Heart left ventricle (tissue), 16 donors: ENCODE measurements at regions of chr2 and their contacts with region 1.

Region 1: GRCh38 chr2:154709215-154709614 is 10.7 kb downstream of the KCNJ3 start:
- DNase-seq: no peak
- ATAC-seq: no peak
- H3K4me3 ChIP-seq: no peak overlapping the region
- H3K27ac ChIP-seq: no peak overlapping the region
- H3K4me1 ChIP-seq: no peaks in the 10 kb centered on the region
- H3K27me3 ChIP-seq: no peaks in the 10 kb centered on the region
- CTCF ChIP-seq: no peak
- POLR2A ChIP-seq: no peak

Region 2: GRCh38 chr2:154392256-154392655 is 317.0 kb before region 1 on chr2:
- intact Hi-C with region 1: no loop called
- DNase-seq: no peak
- ATAC-seq: no peak
- H3K4me3 ChIP-seq: no peak overlapping the region
- H3K27ac ChIP-seq: no peak overlapping the region
- H3K4me1 ChIP-seq: no peaks in the 10 kb centered on the region
- H3K27me3 ChIP-seq: no peaks in the 10 kb centered on the region
- CTCF ChIP-seq: no peak
- POLR2A ChIP-seq: no peak

Region 3: DNA sequence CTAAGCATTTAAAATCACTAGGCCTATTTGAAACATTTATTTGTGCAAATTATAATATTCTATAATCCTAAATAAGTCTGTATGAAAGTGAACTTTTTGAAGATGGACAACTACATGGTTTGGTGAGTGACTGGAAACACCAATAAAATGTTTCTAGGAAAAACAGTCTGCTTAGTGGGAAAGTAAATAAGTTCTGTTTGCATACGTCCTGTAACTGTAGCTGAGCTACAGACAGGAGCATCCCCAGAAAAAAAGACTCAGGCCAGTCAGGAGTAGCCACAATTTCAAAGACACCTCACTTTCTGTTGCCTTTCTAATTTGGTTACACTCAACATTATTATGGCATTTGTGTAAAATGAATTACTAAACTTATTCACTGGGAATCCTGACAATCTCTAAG is 39.1 kb before region 1 on chr2:
- intact Hi-C with region 1: no loop called
- DNase-seq: no peak
- ATAC-seq: no peak
- H3K4me3 ChIP-seq: no peak overlapping the region
- H3K27ac ChIP-seq: no peak overlapping the region
- H3K4me1 ChIP-seq: no peaks in the 10 kb centered on the region
- H3K27me3 ChIP-seq: no peaks in the 10 kb centered on the region
- CTCF ChIP-seq: no peak
- POLR2A ChIP-seq: no peak

Region 4: GRCh38 chr2:155301221-155301620 is 592.0 kb after region 1 on chr2:
- intact Hi-C with region 1: loop called in 1 of 10 experiments (anchors 5 kb)
- DNase-seq: no peak
- ATAC-seq: no peak
- H3K4me3 ChIP-seq: no peak overlapping the region
- H3K27ac ChIP-seq: no peak overlapping the region
- H3K4me1 ChIP-seq: no peaks in the 10 kb centered on the region
- H3K27me3 ChIP-seq: no peaks in the 10 kb centered on the region
- CTCF ChIP-seq: no peak
- POLR2A ChIP-seq: no peak